ENCODE measurements at regions of chr12 and their contacts with region 1.

Region 1: GRCh38 chr12:113184900-113185773 is at the starts of genes DDX54 and RITA1:
- DNase-seq: peak; percentile 41 to 92
- H3K4me3 ChIP-seq: peak within 1 kb of the TSS; percentile 74 to 84
- H3K27ac ChIP-seq: peak within 1 kb of the TSS; percentile 89 to 96
- H3K4me1 ChIP-seq: peaks cover 11 to 20% of the 10 kb centered on the region in 2 donors
- H3K27me3 ChIP-seq: no peaks in the 10 kb centered on the region
- CTCF ChIP-seq: no peak
- total RNA-seq, gene DDX54: 97.0 TPM
- total RNA-seq, gene RITA1: 48.4 TPM

Region 2: GRCh38 chr12:113244047-113244460 is 58.9 kb after region 1 on chr12:
- intact Hi-C with region 1: loop called (anchors 1 kb)
- DNase-seq: peak in 1 of 2 donors; percentile 91
- H3K4me3 ChIP-seq: peak overlapping the region in 1 of 2 donors; percentile 34
- H3K27ac ChIP-seq: peak overlapping the region; percentile 86 to 94
- H3K4me1 ChIP-seq: peaks cover 48 to 78% of the 10 kb centered on the region in 2 donors
- H3K27me3 ChIP-seq: no peaks in the 10 kb centered on the region
- CTCF ChIP-seq: no peak

Region 3: DNA sequence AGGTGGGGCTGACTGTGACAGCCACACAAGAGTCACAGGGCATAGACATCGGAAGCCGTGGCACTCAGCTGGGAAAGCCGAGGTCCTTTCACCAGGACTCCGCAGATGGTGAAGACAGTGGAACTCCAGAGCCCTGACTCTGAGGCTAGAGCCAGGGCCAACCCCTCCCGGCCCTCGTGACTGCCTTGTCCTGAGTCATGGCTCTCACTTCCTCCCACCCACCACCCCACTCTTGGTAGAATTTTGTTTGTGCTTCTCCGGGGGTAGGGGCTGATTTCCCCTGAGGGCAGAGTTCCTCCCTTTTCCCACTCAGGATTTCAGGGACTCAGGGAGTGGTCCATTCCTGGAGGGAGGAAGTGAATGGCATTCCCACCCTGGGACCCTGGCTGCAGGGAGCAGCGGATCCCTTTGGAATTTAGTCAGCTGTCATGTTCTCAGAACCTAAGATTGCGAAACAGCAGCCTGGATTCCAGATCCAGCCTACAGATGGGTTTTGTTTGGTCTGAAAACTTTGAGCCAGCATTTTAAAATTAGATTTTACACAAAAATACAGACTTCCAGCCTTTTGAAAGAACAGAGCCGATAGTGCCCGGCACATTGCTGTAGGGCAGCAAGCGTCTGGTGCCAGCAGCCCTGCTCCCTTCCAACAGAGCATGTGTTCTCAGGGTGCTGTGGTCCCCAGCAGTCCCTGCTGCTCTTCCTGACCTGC is 86.9 kb after region 1 on chr12:
- intact Hi-C with region 1: loop called (anchors 1 kb)
- DNase-seq: peak; percentile 67 to 93
- H3K4me3 ChIP-seq: peak overlapping the region in 1 of 2 donors; percentile 43
- H3K27ac ChIP-seq: peak overlapping the region; percentile 76 to 78
- H3K4me1 ChIP-seq: peaks cover 19 to 27% of the 10 kb centered on the region in 2 donors
- H3K27me3 ChIP-seq: no peaks in the 10 kb centered on the region
- CTCF ChIP-seq: no peak

Region 4: DNA sequence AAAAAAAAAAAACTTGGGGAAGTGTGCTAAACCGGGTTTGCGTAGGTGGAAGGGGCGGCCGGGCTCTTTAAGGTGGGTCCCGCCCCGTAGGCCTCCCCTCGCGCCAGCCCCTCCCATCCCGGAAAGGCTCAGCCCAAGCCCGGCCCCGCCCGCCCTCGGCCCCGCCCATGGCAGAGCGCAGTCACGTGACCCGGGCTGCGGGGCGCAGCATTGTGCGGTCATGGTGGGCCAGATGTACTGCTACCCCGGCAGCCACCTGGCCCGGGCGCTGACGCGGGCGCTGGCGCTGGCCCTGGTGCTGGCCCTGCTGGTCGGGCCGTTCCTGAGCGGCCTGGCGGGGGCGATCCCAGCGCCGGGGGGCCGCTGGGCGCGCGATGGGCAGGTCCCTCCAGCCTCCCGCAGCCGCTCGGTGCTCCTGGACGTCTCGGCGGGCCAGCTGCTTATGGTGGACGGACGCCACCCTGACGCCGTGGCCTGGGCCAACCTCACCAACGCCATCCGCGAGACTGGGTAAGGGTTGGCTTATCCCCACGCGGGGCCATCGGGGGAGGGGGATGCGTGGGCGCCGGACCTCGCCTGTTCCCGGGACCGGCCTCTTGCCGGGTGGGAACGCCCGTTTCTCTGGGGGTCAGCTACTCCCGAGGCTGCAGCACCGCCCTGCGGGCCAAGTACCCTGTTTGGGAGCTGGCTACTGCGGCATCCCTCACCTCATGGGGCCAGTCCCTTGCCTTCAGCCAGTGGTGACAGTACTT is 173.4 kb after region 1 on chr12 and contains the start of gene PLBD2:
- intact Hi-C with region 1: loop called (anchors 1 kb)
- DNase-seq: peak; percentile 77 to 97
- H3K4me3 ChIP-seq: peak within 1 kb of the TSS; percentile 67 to 84
- H3K27ac ChIP-seq: peak within 1 kb of the TSS; percentile 86 to 88
- H3K4me1 ChIP-seq: peaks cover 0 to 14% of the 10 kb centered on the region in 2 donors
- H3K27me3 ChIP-seq: no peaks in the 10 kb centered on the region
- CTCF ChIP-seq: peak in 1 of 3 experiments; percentile 16
- total RNA-seq, gene PLBD2: 55.1 TPM

Region 5: DNA sequence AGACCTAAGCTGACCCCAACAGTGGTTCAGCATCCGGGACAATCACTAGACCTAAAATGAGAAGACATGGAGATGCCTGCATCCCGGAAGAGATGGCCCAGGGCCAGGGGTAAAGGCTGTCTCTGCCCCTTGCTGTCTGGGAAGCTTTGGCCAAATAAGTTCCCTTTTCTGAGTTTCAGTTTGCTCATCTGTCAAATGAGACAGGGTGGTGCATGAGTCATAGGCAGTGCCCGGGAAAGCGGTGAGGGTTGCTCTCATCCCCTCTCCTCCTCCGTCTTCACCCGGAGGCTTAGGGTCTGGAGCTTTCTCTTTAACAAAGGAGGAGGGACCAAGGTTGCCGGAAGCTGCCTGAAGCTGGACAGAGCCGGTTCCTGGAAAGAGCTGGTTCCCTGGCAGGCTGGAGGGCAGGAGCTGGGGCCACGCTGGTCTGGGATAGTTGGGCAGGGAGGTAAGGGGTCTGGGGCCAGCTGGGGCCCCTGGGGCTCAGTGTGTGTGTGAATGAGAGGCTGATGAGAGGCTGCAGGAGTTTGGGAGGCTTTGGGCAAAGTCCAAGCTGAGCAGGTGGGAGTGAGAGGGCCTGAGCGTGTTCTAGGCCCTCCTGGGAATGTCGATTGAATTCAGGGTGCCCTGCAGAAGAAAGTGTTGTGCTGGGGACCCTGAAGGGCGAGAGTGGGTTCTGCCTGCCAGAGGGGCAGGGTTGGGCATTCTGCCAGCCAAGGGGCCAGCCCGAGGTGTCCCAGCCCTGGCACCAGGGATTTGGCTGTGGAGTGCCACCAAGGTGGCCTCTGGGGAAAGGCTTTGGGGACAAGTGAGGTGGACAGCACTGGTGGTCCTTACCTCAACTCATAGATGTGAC is 237.1 kb after region 1 on chr12 and contains the start of gene SDSL:
- intact Hi-C with region 1: loop called (anchors 10 kb)
- DNase-seq: peak; percentile 57 to 84
- H3K4me3 ChIP-seq: peak within 1 kb of the TSS; percentile 52 to 68
- H3K27ac ChIP-seq: peak within 1 kb of the TSS in 1 of 2 donors; percentile 68
- H3K4me1 ChIP-seq: peaks cover 0 to 6% of the 10 kb centered on the region in 2 donors
- H3K27me3 ChIP-seq: no peaks in the 10 kb centered on the region
- CTCF ChIP-seq: no peak
- total RNA-seq, gene SDSL: 11.0 TPM

Region 6: GRCh38 chr12:113965951-113966797 is 781.0 kb after region 1 on chr12 and contains the start of gene RBM19:
- intact Hi-C with region 1: loop called (anchors 10 kb)
- DNase-seq: peak; percentile 85 to 99
- H3K4me3 ChIP-seq: peak within 1 kb of the TSS; percentile 79 to 80
- H3K27ac ChIP-seq: peak within 1 kb of the TSS; percentile 50 to 67
- H3K4me1 ChIP-seq: peaks cover 0 to 6% of the 10 kb centered on the region in 2 donors
- H3K27me3 ChIP-seq: no peaks in the 10 kb centered on the region
- CTCF ChIP-seq: peak; percentile 87 to 94 (median 91)
- total RNA-seq, gene RBM19: 22.8 TPM